Activated T-helper 1 cell treated with anti-CD3 and anti-CD28 coated beads, Interleukin-12 subunit alpha, Interleukin-12 subunit beta, Interleukin-2, Interleukin-4 antibody, amounts not matched to agents 30 ng/mL and 10 ng/mL and 1 ng/mL, durations not matched to agents 14 hours and 24 hours and 36 hours (primary cell): ENCODE measurements at regions of chr5 and their contacts with region 1.

Region 1: DNA sequence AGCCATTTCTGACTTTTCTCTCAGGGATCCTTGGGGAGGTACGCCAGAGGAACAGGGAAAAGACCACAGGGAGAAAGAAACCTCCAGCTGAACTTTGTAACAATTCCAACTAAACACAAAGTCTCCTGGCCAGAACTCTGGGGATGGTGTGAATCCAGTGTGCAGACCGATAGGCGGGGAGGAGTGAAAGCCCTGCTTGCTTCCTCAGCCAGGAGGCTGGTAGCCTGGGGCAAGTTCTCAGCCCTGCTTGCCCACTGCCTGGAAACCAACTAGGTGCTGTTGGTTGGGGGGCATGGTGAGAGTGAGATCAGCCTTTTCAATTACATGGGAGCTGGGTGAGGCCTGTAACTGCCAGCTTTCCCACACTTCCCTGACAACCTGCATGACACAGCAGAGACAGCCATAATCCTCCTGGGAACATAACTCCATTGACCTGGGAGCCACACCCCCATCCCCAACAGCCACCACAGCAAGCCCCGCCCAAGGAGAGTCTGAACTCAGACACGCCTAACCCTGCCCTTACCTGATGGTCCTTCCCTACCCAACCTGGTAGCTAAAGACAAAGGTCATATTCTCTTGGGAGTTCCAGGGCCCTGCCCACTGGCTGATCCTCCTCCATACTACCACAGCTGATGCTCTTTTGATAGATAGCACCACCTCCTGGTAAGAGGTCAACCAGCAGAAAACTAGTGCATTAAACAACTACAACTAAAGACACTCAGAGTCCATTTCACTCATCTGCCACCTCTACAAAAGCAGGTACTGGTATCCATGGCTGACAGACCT is 100.1 kb upstream of the TNFAIP8 start:
- DNase-seq: no peak
- H3K4me3 Mint-ChIP-seq: no peak overlapping the region
- H3K27ac Mint-ChIP-seq: peak overlapping the region; percentile 22
- H3K4me1 Mint-ChIP-seq: peaks cover 10% of the 10 kb centered on the region
- H3K27me3 Mint-ChIP-seq: no peaks in the 10 kb centered on the region

Region 2: DNA sequence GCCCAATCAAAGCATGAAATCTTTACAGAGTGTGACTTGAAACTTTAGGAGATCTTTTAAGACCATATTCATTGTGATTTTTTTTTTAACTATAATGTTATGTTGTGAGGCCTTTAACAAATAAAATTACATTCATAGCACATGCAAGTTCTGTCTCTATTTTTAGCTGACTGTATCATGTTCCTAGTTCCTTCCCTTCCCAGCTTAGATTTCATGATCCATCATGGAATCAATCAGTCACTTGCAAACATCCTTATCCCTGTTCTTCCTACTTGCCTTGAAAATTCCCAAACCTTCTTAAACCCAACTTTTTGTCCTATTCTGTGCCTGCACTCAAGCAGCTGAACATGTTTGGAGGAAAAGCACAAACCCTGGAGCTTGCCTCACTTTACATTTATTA is 43.1 kb before region 1 on chr5:
- intact Hi-C with region 1: loop called (anchors 5 kb)
- DNase-seq: no peak
- H3K4me3 Mint-ChIP-seq: no peak overlapping the region
- H3K27ac Mint-ChIP-seq: no peak overlapping the region
- H3K4me1 Mint-ChIP-seq: no peaks in the 10 kb centered on the region
- H3K27me3 Mint-ChIP-seq: no peaks in the 10 kb centered on the region

Region 3: DNA sequence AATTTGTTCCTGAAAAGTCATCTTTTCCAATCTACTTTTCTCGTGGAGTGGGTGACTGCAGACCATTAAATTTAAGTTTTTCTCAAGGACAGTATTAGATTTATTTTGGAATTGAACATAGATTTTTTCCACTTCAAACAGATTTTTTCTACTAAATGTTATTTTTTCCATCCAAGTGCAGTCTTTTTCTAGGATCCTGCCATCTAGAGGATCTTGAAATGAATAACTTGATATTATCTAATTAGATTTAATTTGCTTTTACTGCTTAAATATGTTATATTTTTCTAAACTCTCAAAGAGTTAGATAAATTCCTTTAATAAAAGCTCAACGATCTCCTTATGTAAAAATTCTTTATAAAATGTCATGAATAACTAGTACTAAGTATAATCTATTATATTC is 1071.4 kb after region 1 on chr5:
- intact Hi-C with region 1: no loop called
- DNase-seq: no peak
- H3K4me3 Mint-ChIP-seq: no peak overlapping the region
- H3K27ac Mint-ChIP-seq: no peak overlapping the region
- H3K4me1 Mint-ChIP-seq: no peaks in the 10 kb centered on the region
- H3K27me3 Mint-ChIP-seq: no peaks in the 10 kb centered on the region